ENCODE measurements at regions of chr3 and their contacts with region 1.

Region 1: GRCh38 chr3:15205934-15206661 is at the start of gene CAPN7:
- DNase-seq: peak; percentile 97 to 98 (median 98)
- ATAC-seq: peak; percentile 95
- H3K4me3 ChIP-seq: peak within 1 kb of the TSS; percentile 90
- H3K27ac ChIP-seq: peak within 1 kb of the TSS; percentile 89
- H3K4me1 ChIP-seq: peaks cover 14% of the 10 kb centered on the region in 2 experiments; a peak in 3 of 5 replicates
- H3K27me3 ChIP-seq: no peaks in the 10 kb centered on the region
- CTCF ChIP-seq: peak; percentile 41 to 52 (median 45); a peak in 5 of 6 replicates
- EP300 ChIP-seq: no peak
- POLR2A ChIP-seq: peak; percentile 84
- RAD21 ChIP-seq: peak in 1 of 2 experiments; percentile 31; a peak in 1 of 4 replicates
- polyA plus RNA-seq, gene CAPN7: 6.5 to 10.0 TPM

Region 2: DNA sequence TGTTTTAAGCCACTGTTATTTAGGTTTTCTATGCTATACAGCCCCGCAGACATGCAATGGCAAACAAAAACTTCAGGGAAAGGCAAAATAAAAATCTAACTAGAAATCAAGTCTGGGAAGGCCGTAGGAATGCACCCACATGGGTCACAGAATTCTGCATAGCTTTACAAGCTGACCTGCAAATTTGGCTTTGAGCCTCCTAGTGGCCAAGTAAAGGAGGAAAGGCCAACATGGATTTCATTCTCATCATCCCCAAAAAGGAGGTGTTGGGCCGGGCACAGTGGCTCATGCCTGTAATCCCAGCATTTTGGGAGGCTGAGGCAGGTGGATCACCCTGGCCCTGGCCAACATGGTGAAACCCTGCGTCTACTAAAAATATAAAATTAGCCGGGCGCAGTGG is 1532.9 kb before region 1 on chr3:
- CTCF ChIA-PET with region 1: no interaction called
- POLR2A ChIA-PET with region 1: no interaction called
- in situ Hi-C with region 1: no loop called
- intact Hi-C with region 1: no loop called
- DNase-seq: peak in 2 of 4 experiments; percentile 58 to 60
- ATAC-seq: peak; percentile 64
- H3K4me3 ChIP-seq: no peak overlapping the region
- H3K27ac ChIP-seq: no peak overlapping the region
- H3K4me1 ChIP-seq: no peaks in the 10 kb centered on the region
- H3K27me3 ChIP-seq: peaks cover 20 to 39% of the 10 kb centered on the region in 2 experiments
- CTCF ChIP-seq: peak; percentile 45 to 62 (median 53)
- EP300 ChIP-seq: no peak
- POLR2A ChIP-seq: no peak
- RAD21 ChIP-seq: 0 out of 4 replicates have a peak, but pooled peaks of 1 of the 2 experiments have one; percentile 12

Region 3: DNA sequence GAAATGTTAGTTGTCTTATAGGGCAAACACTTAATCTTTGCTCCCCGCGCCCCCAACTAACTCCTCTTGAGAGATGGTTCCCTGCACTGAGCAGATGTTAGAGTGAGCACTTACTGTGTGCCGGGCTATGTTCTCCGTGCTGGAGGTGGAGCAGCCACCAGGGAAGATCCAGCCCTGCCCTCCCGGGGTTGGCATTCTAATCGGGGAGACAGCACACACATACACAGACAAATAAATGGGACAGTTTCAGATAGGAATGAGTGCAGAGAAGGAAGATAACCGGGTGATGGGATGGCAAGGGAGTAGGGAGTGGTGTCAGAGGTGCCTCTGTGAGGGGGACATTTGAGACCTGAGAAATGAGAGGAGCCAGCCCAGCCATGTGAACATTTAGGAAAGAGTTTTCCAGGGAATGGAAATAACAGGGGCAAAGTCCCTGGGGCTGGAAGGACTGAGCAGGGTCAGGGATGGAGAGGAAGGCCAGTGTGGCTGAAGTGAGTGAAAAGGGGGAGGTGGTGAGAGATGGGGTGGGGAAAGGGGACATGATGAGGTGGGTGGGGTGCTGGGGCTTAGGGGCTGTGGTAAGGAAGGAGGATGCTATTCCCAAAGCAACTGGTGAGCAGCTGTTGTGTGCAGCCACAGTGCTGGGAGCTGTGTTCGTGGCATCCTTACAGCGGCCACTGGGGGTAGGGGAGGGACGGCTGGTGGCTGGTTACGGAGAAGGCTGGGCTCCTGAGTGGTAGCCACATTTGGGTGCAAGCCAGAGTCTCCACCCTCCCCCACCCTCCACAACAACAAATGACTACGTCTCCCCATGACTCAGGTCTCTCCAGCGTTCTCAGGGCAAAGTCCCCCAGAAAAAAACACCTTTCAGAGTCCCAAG is 402.8 kb before region 1 on chr3:
- CTCF ChIA-PET with region 1: no interaction called
- POLR2A ChIA-PET with region 1: no interaction called
- in situ Hi-C with region 1: no loop called
- intact Hi-C with region 1: no loop called
- DNase-seq: peak; percentile 40 to 63 (median 61)
- ATAC-seq: peak; percentile 80
- H3K4me3 ChIP-seq: no peak overlapping the region
- H3K27ac ChIP-seq: no peak overlapping the region
- H3K4me1 ChIP-seq: peaks cover 0 to 5% of the 10 kb centered on the region in 2 experiments; a peak in 3 of 5 replicates
- H3K27me3 ChIP-seq: peaks cover 28 to 81% of the 10 kb centered on the region in 2 experiments
- CTCF ChIP-seq: 0 out of 6 replicates have a peak, but pooled peaks of 1 of the 3 experiments have one; percentile 6
- EP300 ChIP-seq: no peak
- POLR2A ChIP-seq: no peak
- RAD21 ChIP-seq: no peak

Region 4: GRCh38 chr3:15051531-15051930 is 154.6 kb before region 1 on chr3:
- CTCF ChIA-PET with region 1: no interaction called
- POLR2A ChIA-PET with region 1: no interaction called
- in situ Hi-C with region 1: no loop called
- intact Hi-C with region 1: no loop called
- DNase-seq: peak; percentile 69 to 79 (median 72)
- ATAC-seq: peak; percentile 90
- H3K4me3 ChIP-seq: no peak overlapping the region
- H3K27ac ChIP-seq: peak overlapping the region; percentile 7; the same call in 1 of the 3 replicates
- H3K4me1 ChIP-seq: peaks cover 33 to 43% of the 10 kb centered on the region in 2 experiments
- H3K27me3 ChIP-seq: no peaks in the 10 kb centered on the region
- CTCF ChIP-seq: peak; percentile 76 to 90 (median 77)
- EP300 ChIP-seq: no peak
- POLR2A ChIP-seq: peak; percentile 18; the same call in 1 of the 2 replicates
- RAD21 ChIP-seq: peak; percentile 6 to 51; a peak in 2 of 4 replicates

Region 5: GRCh38 chr3:15217841-15218267 is 11.8 kb after region 1 on chr3:
- CTCF ChIA-PET with region 1: no interaction called
- POLR2A ChIA-PET with region 1: interaction called, 41 read pairs
- in situ Hi-C with region 1: no loop called
- intact Hi-C with region 1: no loop called
- DNase-seq: no peak
- ATAC-seq: no peak
- H3K4me3 ChIP-seq: no peak overlapping the region
- H3K27ac ChIP-seq: no peak overlapping the region
- H3K4me1 ChIP-seq: no peaks in the 10 kb centered on the region
- H3K27me3 ChIP-seq: no peaks in the 10 kb centered on the region
- CTCF ChIP-seq: no peak
- EP300 ChIP-seq: no peak
- POLR2A ChIP-seq: no peak
- RAD21 ChIP-seq: no peak

Region 6: DNA sequence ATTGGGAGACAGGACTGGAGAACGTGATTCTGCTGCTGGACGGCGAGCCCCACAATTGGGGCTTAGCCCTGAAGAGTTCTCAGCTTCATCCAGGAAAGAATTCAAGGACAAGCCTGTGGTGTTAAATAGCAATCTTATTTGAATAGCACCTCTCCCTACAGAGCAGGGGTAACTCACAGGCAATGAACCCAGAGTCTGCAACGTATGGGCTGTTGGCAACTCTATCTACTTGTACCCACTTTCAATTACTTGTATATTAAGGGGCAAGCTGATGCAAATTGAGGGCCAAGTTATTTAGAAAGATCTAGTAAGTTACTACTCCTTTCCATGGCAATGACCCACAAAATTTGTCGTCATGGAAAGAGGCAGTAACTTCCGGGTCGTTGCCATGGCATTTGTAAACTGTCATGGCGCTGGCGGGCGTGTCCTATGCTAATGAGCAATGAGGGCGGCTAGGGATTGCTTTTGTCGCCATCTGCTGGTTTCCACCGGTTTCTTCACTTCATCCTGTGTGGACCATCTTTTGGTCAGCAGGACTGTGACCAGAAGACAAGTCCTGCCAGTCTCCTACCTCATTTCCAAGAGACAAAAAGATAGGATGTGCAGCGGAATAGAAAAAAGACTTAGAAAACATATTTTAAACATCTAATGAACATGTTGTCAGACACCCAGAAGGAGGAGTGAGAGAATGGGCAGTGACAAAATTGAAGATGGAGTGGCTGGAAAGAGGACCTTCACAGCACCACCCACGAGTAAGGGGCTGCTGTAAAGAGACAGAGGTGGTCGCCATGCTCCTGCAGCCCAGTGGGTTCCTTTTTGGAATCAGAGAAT is 172.1 kb after region 1 on chr3:
- CTCF ChIA-PET with region 1: interaction called, 5 read pairs
- POLR2A ChIA-PET with region 1: no interaction called
- in situ Hi-C with region 1: no loop called
- intact Hi-C with region 1: loop called (anchors 1 kb)
- DNase-seq: peak; percentile 79 to 98 (median 82)
- ATAC-seq: peak; percentile 99
- H3K4me3 ChIP-seq: no peak overlapping the region
- H3K27ac ChIP-seq: peak overlapping the region; percentile 58
- H3K4me1 ChIP-seq: peaks cover 5 to 16% of the 10 kb centered on the region in 2 experiments; a peak in 4 of 5 replicates
- H3K27me3 ChIP-seq: no peaks in the 10 kb centered on the region
- CTCF ChIP-seq: peak; percentile 91 to 99 (median 97)
- EP300 ChIP-seq: peak; percentile 78
- POLR2A ChIP-seq: no peak
- RAD21 ChIP-seq: peak; percentile 99

Region 7: DNA sequence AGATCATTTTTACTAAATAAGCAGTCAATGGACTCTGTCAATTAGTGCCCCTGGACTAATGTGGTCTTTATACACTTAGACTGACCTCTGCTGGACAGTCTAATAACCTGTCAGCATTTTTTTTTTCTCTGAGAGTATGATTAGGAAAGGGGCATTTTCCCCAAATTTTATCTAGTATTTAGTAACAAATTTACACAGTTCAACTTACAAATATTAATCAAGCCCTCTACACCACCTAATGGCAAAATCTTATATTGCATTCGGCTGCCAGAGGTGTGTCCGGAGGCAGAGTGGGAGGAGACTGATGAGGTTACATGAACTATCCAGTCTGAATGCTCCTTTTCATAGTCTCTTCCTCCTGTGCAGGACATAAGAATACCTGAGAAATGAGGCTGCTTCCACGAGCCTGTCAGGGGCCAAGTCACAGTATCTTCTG is 351.4 kb after region 1 on chr3:
- CTCF ChIA-PET with region 1: interaction called, 13 read pairs
- POLR2A ChIA-PET with region 1: no interaction called
- in situ Hi-C with region 1: no loop called
- intact Hi-C with region 1: loop called (anchors 2 kb)
- DNase-seq: peak; percentile 52 to 81 (median 64)
- ATAC-seq: peak; percentile 98
- H3K4me3 ChIP-seq: no peak overlapping the region
- H3K27ac ChIP-seq: no peak overlapping the region; the same call in 2 of the 3 replicates
- H3K4me1 ChIP-seq: peaks cover 0 to 8% of the 10 kb centered on the region in 2 experiments; a peak in 2 of 5 replicates
- H3K27me3 ChIP-seq: no peaks in the 10 kb centered on the region
- CTCF ChIP-seq: peak; percentile 43 to 73 (median 68)
- EP300 ChIP-seq: no peak
- POLR2A ChIP-seq: no peak
- RAD21 ChIP-seq: peak; percentile 77 to 83

Region 8: GRCh38 chr3:15815696-15816095 is 609.6 kb after region 1 on chr3:
- CTCF ChIA-PET with region 1: no interaction called
- POLR2A ChIA-PET with region 1: no interaction called
- in situ Hi-C with region 1: no loop called
- intact Hi-C with region 1: loop called (anchors 5 kb)
- DNase-seq: peak in 1 of 4 experiments; percentile 34
- ATAC-seq: peak; percentile 43; the same call in 1 of the 3 replicates
- H3K4me3 ChIP-seq: no peak overlapping the region
- H3K27ac ChIP-seq: no peak overlapping the region
- H3K4me1 ChIP-seq: no peaks in the 10 kb centered on the region
- H3K27me3 ChIP-seq: no peaks in the 10 kb centered on the region
- CTCF ChIP-seq: peak in 1 of 3 experiments; percentile 59; a peak in 2 of 6 replicates
- EP300 ChIP-seq: no peak
- POLR2A ChIP-seq: no peak
- RAD21 ChIP-seq: peak; percentile 64 to 82

Region 9: DNA sequence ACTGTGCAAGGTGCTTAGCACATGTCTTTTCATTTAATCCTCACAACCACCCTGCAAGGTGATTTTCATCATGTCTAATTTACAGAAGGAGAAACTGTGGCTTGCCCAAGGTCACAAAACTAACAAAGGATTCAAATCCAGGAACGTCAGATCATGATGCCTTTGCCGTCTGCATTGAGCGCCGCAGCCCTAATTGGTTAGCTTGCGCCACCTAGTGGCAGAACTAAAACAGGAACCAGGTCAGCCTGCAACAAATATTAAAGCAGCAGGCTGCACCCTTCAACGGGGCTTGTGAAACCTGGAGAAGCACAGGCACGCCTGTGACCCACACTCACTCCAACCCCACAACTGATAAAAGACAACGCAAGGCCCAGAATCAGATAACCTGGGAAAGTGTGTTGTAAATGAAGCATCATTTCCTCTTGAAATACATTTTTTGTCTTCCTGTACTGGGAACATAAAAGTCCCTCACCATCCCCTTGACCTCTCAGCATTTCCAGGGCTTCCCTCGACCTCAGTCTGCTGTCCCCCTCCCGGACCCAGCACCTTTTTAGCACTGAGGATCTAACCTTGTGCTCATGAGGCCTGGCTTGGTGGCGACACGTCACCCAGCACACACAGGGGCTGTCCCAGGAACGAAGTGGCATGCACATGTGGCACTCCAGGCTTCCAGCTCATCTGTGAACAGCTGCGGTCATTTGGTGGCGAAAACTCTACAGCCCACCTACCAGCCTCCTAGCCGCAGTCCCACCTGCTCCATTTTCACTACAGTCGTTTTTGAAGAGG is 1041.4 kb after region 1 on chr3:
- CTCF ChIA-PET with region 1: interaction called, 4 read pairs
- POLR2A ChIA-PET with region 1: no interaction called
- in situ Hi-C with region 1: no loop called
- intact Hi-C with region 1: loop called (anchors 2 kb)
- DNase-seq: peak; percentile 74 to 90 (median 79)
- ATAC-seq: peak; percentile 95
- H3K4me3 ChIP-seq: no peak overlapping the region
- H3K27ac ChIP-seq: no peak overlapping the region
- H3K4me1 ChIP-seq: peaks cover 3 to 4% of the 10 kb centered on the region in 2 experiments; a peak in 2 of 5 replicates
- H3K27me3 ChIP-seq: peaks cover 21 to 39% of the 10 kb centered on the region in 2 experiments
- CTCF ChIP-seq: peak; percentile 92 to 99 (median 96)
- EP300 ChIP-seq: no peak
- POLR2A ChIP-seq: no peak
- RAD21 ChIP-seq: peak; percentile 94 to 95

Region 10: GRCh38 chr3:16550676-16551341 is 1344.7 kb after region 1 on chr3:
- CTCF ChIA-PET with region 1: no interaction called
- POLR2A ChIA-PET with region 1: no interaction called
- in situ Hi-C with region 1: loop called (anchors 25 kb)
- intact Hi-C with region 1: loop called (anchors 10 kb)
- DNase-seq: peak; percentile 75 to 89 (median 80)
- ATAC-seq: peak; percentile 88
- H3K4me3 ChIP-seq: no peak overlapping the region
- H3K27ac ChIP-seq: peak overlapping the region; percentile 48; the same call in 1 of the 3 replicates
- H3K4me1 ChIP-seq: peaks cover 4 to 16% of the 10 kb centered on the region in 2 experiments; a peak in 4 of 5 replicates
- H3K27me3 ChIP-seq: peaks cover 2 to 8% of the 10 kb centered on the region in 2 experiments; a peak in 2 of 5 replicates
- CTCF ChIP-seq: peak; percentile 89 to 97 (median 93)
- EP300 ChIP-seq: peak; percentile 62
- POLR2A ChIP-seq: no peak
- RAD21 ChIP-seq: peak; percentile 97